Activated CD4-positive, alpha-beta T cell treated with anti-CD3 and anti-CD28 coated beads, Interleukin-2, amount 10 ng/mL, durations not matched to agents 7 days and 5 days (primary cell): ENCODE measurements at regions of chr6 and their contacts with region 1.

Region 1: DNA sequence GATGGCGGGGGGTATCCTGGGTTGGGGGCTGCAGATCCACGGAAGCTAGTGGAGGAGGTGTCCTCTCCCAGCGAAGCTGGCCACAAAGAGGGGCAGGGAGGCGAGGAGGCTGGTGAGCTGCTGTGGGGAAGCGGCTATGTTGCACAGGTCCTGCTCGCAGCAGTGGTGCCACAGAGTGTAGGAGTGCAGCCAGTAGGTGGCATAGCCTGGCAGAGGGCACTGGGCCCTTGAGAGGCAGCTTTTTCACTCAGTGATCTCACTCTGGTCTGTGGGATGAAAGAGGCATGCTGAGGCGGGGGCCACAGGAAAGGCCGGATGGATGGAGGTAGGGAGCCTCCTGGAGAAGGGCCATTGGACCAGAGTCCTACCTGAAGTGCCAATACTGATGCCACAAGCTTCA is 2.9 kb upstream of the LY6G6D start:
- DNase-seq: peak; percentile 38
- H3K4me3 Mint-ChIP-seq: no peak overlapping the region
- H3K27ac Mint-ChIP-seq: peak overlapping the region; percentile 25
- H3K4me1 Mint-ChIP-seq: peaks cover 29% of the 10 kb centered on the region
- H3K27me3 Mint-ChIP-seq: peaks cover 7% of the 10 kb centered on the region

Region 2: GRCh38 chr6:31660381-31661261 is 51.7 kb before region 1 on chr6 and contains the start of gene C6orf47:
- CTCF ChIA-PET with region 1: no interaction called
- POLR2A ChIA-PET with region 1: no interaction called
- DNase-seq: peak; percentile 79
- H3K4me3 Mint-ChIP-seq: peak within 1 kb of the TSS; percentile 93
- H3K27ac Mint-ChIP-seq: peak within 1 kb of the TSS; percentile 87
- H3K4me1 Mint-ChIP-seq: peaks cover 75% of the 10 kb centered on the region
- H3K27me3 Mint-ChIP-seq: no peaks in the 10 kb centered on the region
- total RNA-seq, gene C6orf47: 20.2 to 20.9 TPM

Region 3: DNA sequence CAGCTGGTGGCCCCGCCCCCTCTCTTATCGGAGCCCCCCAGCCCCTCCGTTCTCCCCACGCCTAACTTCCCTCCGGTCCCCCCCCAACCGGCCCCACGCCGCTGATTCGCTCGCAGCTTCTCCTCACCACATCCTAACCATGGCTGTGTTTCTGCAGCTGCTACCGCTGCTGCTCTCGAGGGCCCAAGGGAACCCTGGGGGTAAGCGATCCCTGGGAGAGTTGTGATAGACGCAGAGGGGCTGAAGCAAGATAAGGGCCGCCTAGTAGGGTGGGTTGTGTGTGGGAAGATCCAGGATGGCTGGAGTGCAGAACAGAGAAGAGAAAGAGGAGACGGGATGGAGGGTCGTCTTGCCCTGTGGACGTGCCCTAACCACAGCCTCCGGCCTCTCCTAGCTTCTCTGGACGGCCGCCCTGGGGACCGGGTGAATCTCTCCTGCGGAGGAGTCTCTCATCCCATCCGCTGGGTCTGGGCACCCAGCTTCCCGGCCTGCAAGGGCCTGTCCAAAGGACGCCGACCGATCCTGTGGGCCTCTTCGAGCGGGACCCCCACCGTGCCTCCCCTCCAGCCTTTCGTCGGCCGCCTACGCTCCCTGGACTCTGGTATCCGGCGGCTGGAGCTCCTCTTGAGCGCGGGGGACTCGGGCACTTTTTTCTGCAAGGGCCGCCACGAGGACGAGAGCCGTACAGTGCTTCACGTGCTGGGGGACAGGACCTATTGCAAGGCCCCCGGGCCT is 11.1 kb after region 1 on chr6 and contains the start of gene MPIG6B:
- CTCF ChIA-PET with region 1: interaction called, 13 read pairs
- POLR2A ChIA-PET with region 1: no interaction called
- DNase-seq: no peak
- H3K4me3 Mint-ChIP-seq: no peak within 1 kb of the TSS
- H3K27ac Mint-ChIP-seq: no peak within 1 kb of the TSS
- H3K4me1 Mint-ChIP-seq: peaks cover 43% of the 10 kb centered on the region
- H3K27me3 Mint-ChIP-seq: peaks cover 2% of the 10 kb centered on the region
- total RNA-seq, gene MPIG6B: 0.15 to 0.19 TPM